ENCODE measurements at regions of chr6 and their contacts with region 1.

Region 1: GRCh38 chr6:109318328-109318876 is 63.9 kb downstream of the CD164 start:
- DNase-seq: peak; percentile 38 to 79
- ATAC-seq: peak; percentile 87 to 90
- H3K4me3 ChIP-seq: peak overlapping the region in 1 of 4 donors; percentile 16
- H3K27ac ChIP-seq: peak overlapping the region; percentile 68 to 84 (median 84)
- H3K4me1 ChIP-seq: peaks cover 25 to 26% of the 10 kb centered on the region in 2 donors
- H3K27me3 ChIP-seq: no peaks in the 10 kb centered on the region
- CTCF ChIP-seq: no peak
- POLR2A ChIP-seq: peak in 1 of 2 donors; percentile 53

Region 2: GRCh38 chr6:108988296-108988695 is 330.1 kb before region 1 on chr6:
- in situ Hi-C with region 1: no loop called
- intact Hi-C with region 1: no loop called
- DNase-seq: no peak
- ATAC-seq: no peak
- H3K4me3 ChIP-seq: no peak overlapping the region
- H3K27ac ChIP-seq: no peak overlapping the region
- H3K4me1 ChIP-seq: peaks cover 0 to 4% of the 10 kb centered on the region in 2 donors
- H3K27me3 ChIP-seq: no peaks in the 10 kb centered on the region
- CTCF ChIP-seq: no peak
- POLR2A ChIP-seq: no peak

Region 3: GRCh38 chr6:109362102-109362884 is 43.9 kb after region 1 on chr6:
- in situ Hi-C with region 1: no loop called
- intact Hi-C with region 1: loop called (anchors 5 kb)
- DNase-seq: no peak
- ATAC-seq: peak; percentile 44 to 61
- H3K4me3 ChIP-seq: no peak overlapping the region
- H3K27ac ChIP-seq: peak overlapping the region in 3 of 4 donors; percentile 24 to 72 (median 46)
- H3K4me1 ChIP-seq: peaks cover 4 to 19% of the 10 kb centered on the region in 2 donors
- H3K27me3 ChIP-seq: no peaks in the 10 kb centered on the region
- CTCF ChIP-seq: no peak
- POLR2A ChIP-seq: no peak

Region 4: DNA sequence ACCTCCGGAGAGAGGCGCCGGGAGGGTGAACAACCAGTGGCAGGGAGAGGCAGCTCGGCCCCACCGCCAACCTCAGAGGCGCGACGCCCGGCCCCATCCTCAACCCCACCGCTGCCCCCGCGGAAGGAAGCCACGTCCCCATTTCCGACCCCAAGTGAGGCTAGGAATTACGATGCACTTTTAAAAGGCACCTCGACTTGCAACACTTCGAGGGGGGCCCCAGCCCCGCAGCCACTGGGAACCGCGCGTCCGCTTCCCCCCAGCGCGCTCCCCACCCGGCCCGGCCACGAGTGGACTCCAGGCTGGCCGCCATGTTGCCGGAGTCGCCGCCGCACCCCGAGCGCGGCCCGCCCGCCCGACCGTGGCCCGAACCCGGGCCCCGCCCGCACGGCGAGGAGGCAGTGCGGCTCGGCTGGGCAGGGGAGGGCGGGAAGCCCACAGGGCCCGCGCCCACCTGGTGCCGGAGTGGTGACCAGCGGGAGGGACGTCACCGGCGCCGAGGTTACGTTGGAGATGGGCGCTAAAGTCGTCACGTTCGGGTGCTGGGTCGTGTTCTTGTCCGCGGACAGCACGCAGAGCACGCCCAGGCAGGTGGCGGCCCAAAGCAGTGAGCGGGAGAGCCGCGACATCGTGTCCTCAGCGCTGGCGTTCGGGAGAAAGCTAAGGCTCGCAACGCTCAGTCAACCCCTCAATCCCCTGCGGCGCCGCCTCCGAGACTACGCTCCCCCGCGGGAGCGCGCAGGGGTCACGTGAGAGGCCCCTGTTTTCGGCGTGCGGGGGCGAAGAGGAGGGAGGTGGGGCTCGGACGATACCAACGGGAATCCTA is 63.6 kb after region 1 on chr6 and contains the start of gene CD164:
- in situ Hi-C with region 1: no loop called
- intact Hi-C with region 1: no loop called
- DNase-seq: peak; percentile 89 to 91
- ATAC-seq: peak; percentile 72 to 74
- H3K4me3 ChIP-seq: peak within 1 kb of the TSS; percentile 87 to 100 (median 98)
- H3K27ac ChIP-seq: peak within 1 kb of the TSS; percentile 96 to 100 (median 99)
- H3K4me1 ChIP-seq: peaks cover 43% of the 10 kb centered on the region in 2 donors
- H3K27me3 ChIP-seq: no peaks in the 10 kb centered on the region
- CTCF ChIP-seq: no peak
- POLR2A ChIP-seq: peak; percentile 97 to 98
- total RNA-seq, gene CD164: 50.1 to 134 (median 117) TPM

Region 5: GRCh38 chr6:110756817-110757216 is 1438.4 kb after region 1 on chr6:
- in situ Hi-C with region 1: no loop called
- intact Hi-C with region 1: no loop called
- DNase-seq: no peak
- ATAC-seq: no peak
- H3K4me3 ChIP-seq: no peak overlapping the region
- H3K27ac ChIP-seq: no peak overlapping the region
- H3K4me1 ChIP-seq: no peaks in the 10 kb centered on the region
- H3K27me3 ChIP-seq: no peaks in the 10 kb centered on the region
- CTCF ChIP-seq: no peak
- POLR2A ChIP-seq: no peak